ENCODE measurements at regions of chr1 and their contacts with region 1.

Region 1: DNA sequence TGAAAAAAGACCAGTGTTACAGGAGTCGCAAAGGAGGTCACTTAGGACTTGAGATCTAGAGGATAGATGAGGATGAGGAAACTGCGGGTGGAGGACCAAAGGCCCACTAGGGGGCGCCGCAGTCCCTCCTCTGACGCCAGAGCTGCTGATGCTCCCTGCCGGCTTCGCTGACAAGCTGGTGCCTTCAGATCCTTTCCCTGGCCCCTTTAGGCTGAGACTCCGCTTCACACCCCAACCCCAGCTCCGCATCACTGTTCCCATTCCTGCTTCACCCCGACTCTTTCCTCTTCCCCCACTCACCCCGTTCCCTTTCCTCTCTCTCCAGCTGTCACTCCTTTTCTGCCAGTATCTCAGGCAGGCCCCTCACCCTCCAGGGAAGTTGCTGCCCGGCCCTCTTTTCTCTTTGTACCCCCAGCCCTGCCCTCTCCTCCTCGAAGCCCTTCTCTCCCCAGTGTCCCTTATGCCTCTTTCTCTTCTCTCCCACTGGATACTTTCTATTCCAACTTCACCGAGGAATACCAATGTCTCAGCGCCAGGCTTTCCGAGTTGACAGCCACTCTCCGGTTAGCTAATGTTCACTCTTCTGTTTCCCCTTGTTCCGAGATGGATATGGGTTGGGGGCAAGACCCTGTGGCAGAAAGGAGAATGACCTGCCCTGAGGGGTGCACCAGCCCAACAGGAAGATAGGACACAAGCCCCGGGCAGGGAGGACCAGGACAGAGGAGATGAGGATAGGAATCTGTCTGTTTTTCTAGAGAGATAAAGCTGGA is 4.5 kb downstream of the KCNJ9 start:
- DNase-seq: peak; percentile 94
- ATAC-seq: peak; percentile 74
- H3K4me3 Mint-ChIP-seq: no peak overlapping the region
- H3K27ac Mint-ChIP-seq: no peak overlapping the region
- H3K4me1 Mint-ChIP-seq: peaks cover 19% of the 10 kb centered on the region
- H3K27me3 Mint-ChIP-seq: peaks cover 51% of the 10 kb centered on the region
- CTCF ChIP-seq: peak; percentile 92

Region 2: GRCh38 chr1:160031365-160032164 is 54.3 kb before region 1 on chr1 and contains the start of gene PIGM:
- CTCF ChIA-PET with region 1: interaction called, 978 read pairs
- POLR2A ChIA-PET with region 1: interaction called, 3 read pairs
- DNase-seq: peak; percentile 99
- ATAC-seq: peak; percentile 98
- H3K4me3 Mint-ChIP-seq: peak within 1 kb of the TSS; percentile 91
- H3K27ac Mint-ChIP-seq: peak within 1 kb of the TSS; percentile 97
- H3K4me1 Mint-ChIP-seq: peaks cover 17% of the 10 kb centered on the region
- H3K27me3 Mint-ChIP-seq: peaks cover 12% of the 10 kb centered on the region; the same call in 1 of the 2 replicates
- CTCF ChIP-seq: no peak
- total RNA-seq, gene PIGM: 4.4 to 5.2 TPM (median 4.4 TPM) in 3 replicates

Region 3: DNA sequence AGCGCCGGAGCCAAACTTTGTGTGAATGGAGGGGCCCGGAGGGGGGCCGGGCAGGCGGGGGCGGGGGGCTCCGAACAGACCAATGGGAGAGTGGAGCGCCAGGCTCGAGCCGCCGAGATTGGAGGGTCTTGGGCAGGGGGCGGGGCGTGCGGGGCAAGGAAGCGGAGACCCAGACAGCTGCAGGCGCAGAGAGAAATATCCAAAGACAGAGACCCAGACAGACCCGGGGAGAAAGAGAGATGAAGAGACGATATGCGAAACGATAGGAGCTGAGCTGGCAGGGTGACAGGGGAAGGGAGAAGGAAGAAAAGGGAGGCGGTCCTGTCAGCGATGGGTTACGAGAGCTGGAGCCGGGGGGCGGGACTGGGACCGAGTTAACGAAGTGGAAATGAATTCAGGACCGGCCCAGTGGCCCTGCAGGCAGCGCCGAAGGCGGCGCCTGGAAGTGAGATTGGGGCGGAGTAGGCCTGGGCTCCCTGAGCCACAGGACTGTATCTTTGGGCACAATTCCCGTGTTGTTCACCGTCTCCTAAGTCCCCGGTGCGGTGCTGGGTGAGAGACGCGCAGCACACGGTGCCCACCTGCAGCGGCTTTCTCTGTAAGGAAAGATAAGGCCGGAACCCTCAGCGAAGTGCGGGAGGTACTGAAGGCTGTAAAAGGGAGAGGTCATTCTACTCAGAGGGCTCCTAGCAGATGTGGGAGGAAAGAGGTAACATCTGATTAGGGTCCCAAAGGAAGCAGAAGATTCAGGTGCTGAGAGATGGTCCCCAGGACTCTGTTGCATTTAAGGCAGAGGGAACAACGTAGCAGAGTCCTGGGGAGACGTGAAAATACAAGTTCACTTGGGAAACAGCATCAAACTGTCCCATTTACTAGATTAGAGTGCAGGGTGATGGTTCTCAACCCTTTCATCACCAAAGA is 15.4 kb before region 1 on chr1:
- CTCF ChIA-PET with region 1: interaction called, 29 read pairs
- POLR2A ChIA-PET with region 1: no interaction called
- DNase-seq: peak; percentile 93
- ATAC-seq: peak; percentile 94
- H3K4me3 Mint-ChIP-seq: peak overlapping the region; percentile 96
- H3K27ac Mint-ChIP-seq: peak overlapping the region; percentile 50; the same call in 1 of the 2 replicates
- H3K4me1 Mint-ChIP-seq: peaks cover 32% of the 10 kb centered on the region
- H3K27me3 Mint-ChIP-seq: peaks cover 82% of the 10 kb centered on the region
- CTCF ChIP-seq: no peak

Region 4: DNA sequence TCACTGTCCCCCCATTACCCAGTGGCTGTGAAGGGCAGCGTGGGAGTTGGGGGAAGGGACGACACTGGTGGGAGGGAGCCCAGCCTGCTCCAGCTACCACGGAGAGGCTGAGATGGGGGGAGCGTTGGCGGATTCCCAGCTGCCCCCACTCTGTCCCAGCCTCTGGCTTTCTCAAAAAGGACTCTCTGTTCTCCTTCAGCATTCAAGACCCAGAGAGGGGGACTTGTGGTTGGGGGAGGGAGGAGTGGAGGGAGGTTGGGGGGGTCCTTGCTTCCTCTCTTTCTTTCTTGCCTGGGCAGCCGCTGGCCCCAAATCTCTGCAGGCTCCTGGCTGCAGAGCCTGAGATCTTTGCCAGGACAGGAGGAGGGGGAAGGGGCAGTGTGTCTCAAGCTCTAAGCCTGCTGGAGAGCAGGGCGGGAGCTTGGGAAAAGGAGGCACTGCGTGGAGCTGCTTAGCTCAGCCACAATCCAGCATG is 31.9 kb after region 1 on chr1:
- CTCF ChIA-PET with region 1: interaction called, 22 read pairs
- POLR2A ChIA-PET with region 1: no interaction called
- DNase-seq: no peak
- ATAC-seq: peak; percentile 40; the same call in 1 of the 2 replicates
- H3K4me3 Mint-ChIP-seq: 0 out of 2 replicates have a peak overlapping the region, but pooled peaks have one; percentile 16
- H3K27ac Mint-ChIP-seq: no peak overlapping the region
- H3K4me1 Mint-ChIP-seq: peaks cover 58% of the 10 kb centered on the region
- H3K27me3 Mint-ChIP-seq: peaks cover under 1% of the 10 kb centered on the region; the same call in 1 of the 2 replicates
- CTCF ChIP-seq: no peak

Region 5: GRCh38 chr1:160169553-160170399 is 83.9 kb after region 1 on chr1:
- CTCF ChIA-PET with region 1: interaction called, 29 read pairs
- POLR2A ChIA-PET with region 1: no interaction called
- DNase-seq: peak; percentile 75
- ATAC-seq: peak; percentile 78
- H3K4me3 Mint-ChIP-seq: peak overlapping the region; percentile 42
- H3K27ac Mint-ChIP-seq: peak overlapping the region; percentile 94
- H3K4me1 Mint-ChIP-seq: peaks cover 64% of the 10 kb centered on the region
- H3K27me3 Mint-ChIP-seq: peaks cover 25% of the 10 kb centered on the region
- CTCF ChIP-seq: no peak

Measured in WTC11 (cell line).